OCI-LY7 (cell line): ENCODE measurements at regions of chr13 and their contacts with region 1.

Region 1: GRCh38 chr13:50801087-50801931 is 42.2 kb downstream of the DLEU7 start:
- DNase-seq: peak; percentile 90
- H3K4me3 ChIP-seq: no peak overlapping the region
- H3K27ac ChIP-seq: peak overlapping the region; percentile 2
- H3K4me1 ChIP-seq: peaks cover 35% of the 10 kb centered on the region
- CTCF ChIP-seq: peak; percentile 93

Region 2: DNA sequence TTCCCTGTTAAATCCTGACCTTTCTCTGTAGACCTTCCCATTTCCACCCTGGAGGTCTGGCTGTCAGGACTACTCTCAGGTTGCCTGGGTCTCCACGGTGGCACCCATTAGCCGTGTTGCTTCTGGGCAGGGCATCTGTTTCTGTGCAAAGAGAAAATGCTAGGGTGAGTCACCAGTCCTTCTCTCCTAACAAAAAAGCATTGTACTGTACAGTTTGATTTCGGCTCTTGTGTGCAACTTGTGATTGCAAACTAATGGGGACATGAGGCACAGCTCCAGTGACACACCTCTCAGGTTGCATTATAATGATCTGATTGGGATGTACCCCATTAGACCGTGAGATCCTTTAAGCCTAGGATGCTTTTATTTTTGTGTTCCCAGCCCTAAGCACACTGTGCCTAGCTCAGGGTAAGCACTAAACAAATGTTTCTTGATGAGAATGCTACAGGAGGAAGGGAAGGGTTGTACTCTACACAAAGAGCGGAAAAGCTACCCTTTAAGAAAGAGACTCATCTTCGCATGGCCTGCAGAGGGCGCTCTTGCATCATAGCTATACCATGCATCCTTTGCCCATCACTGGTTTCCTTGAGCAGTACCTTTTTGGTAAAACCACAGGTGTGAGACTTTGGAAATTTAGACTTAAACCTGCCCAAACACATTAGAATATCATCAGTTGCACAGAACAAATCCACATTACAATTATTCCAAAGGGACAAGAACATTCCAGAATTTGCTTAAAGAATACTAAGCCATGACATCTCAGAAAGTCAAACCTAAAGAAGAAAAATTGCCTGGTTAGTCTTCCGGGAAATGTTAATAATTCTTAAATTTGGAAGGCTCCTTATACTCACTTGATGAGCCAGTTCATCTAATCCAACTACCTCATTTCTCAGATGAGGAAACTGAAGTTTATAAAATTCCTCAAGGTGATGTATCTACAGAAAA is 824.7 kb before region 1 on chr13:
- CTCF ChIA-PET with region 1: interaction called, 3 read pairs
- POLR2A ChIA-PET with region 1: no interaction called
- intact Hi-C with region 1: loop called (anchors 1 kb)
- DNase-seq: peak; percentile 87
- H3K4me3 ChIP-seq: no peak overlapping the region
- H3K27ac ChIP-seq: no peak overlapping the region
- H3K4me1 ChIP-seq: peaks cover 8% of the 10 kb centered on the region
- CTCF ChIP-seq: peak; percentile 99

Region 3: DNA sequence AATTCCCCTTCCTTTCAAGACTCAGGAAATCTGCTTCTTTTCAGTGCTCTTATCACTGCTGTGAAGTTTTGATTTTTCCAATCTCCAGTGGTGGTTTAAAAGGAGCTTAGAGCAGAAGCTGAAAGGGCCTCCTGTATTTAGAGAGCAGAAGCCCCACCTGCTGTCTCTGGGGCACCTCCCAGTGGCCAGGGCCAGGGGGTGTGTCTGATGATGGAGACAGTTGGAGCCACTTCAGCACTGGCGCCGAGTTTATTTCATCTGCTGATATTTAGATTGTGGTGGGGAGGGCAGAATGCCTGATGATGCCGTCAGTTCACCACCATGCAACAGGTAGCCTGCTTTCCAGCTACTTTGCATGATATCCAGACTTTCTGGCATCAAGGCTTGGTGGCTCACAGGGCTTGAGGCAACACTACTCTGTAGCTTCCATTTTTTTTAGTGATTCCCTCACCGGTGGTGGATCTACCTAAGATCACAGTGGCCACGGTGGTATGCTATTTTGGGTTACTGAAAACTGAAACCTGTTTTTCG is 414.2 kb before region 1 on chr13:
- CTCF ChIA-PET with region 1: no interaction called
- POLR2A ChIA-PET with region 1: no interaction called
- intact Hi-C with region 1: loop called (anchors 10 kb)
- DNase-seq: peak; percentile 75
- H3K4me3 ChIP-seq: peak overlapping the region; percentile 31
- H3K27ac ChIP-seq: no peak overlapping the region
- H3K4me1 ChIP-seq: peaks cover 17% of the 10 kb centered on the region
- CTCF ChIP-seq: peak; percentile 79

Region 4: GRCh38 chr13:50529154-50529882 is 272.0 kb before region 1 on chr13:
- CTCF ChIA-PET with region 1: no interaction called
- POLR2A ChIA-PET with region 1: interaction called, 4 read pairs
- intact Hi-C with region 1: loop called (anchors 2 kb)
- DNase-seq: no peak
- H3K4me3 ChIP-seq: no peak overlapping the region
- H3K27ac ChIP-seq: no peak overlapping the region
- H3K4me1 ChIP-seq: peaks cover 54% of the 10 kb centered on the region
- CTCF ChIP-seq: no peak

Region 5: DNA sequence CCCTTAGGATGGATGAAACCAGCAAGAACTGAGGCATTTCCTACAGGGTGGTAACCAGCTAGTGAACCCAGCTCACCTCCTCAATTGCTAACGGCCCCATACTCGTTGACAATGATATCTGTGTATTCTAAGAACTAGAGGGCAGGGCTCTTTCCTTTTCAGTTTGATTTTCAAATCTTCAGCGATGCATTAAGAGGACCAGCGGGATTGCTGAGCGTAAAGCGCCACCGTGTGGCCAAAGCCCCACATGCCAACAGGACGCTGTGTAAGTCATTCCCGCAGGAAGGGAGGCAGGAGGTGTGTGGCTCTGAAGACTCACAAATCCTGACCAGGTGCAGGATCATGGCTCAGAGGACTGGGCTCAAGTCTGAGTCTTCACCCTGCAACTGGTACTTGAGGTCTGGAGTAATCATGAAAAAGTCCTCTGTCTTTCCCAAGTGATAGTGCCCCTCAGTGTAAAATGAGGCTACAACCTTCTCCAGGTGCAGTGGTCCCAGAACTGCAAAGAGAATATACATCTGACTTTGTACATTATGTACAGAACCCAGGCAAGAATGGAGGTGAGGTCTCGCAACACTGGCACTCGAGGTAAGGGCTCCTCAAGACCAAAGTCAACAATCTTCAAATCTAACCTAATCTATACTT is 268.8 kb after region 1 on chr13:
- CTCF ChIA-PET with region 1: no interaction called
- POLR2A ChIA-PET with region 1: no interaction called
- intact Hi-C with region 1: loop called (anchors 2 kb)
- DNase-seq: peak; percentile 88
- H3K4me3 ChIP-seq: no peak overlapping the region
- H3K27ac ChIP-seq: no peak overlapping the region
- H3K4me1 ChIP-seq: peaks cover 5% of the 10 kb centered on the region
- CTCF ChIP-seq: peak; percentile 98